ENCODE measurements at regions of chr17 and their contacts with region 1.

Region 1: DNA sequence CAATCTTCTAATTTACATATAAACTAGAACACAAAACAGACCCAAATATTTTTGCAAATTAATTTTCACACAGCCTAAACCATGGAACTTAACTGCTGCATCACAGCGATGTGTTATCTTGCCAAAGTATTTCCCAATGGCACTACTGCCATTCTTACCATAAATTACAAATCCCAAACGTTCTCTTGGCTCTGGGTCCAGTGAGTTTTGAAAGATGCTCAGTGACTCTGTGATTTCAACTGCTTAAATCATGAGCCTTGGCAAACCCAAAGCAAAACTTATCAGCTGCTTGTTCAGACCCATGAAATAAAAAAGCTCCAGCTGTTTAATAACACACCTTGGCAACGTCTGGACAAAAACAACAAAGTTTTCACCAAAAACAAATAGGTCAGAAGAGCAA is 223.0 kb downstream of the CA10 start:
- DNase-seq: no peak
- ATAC-seq: no peak
- H3K4me3 ChIP-seq: no peak overlapping the region
- H3K27ac ChIP-seq: no peak overlapping the region
- H3K4me1 ChIP-seq: no peaks in the 10 kb centered on the region
- H3K27me3 ChIP-seq: no peaks in the 10 kb centered on the region
- CTCF ChIP-seq: no peak

Region 2: GRCh38 chr17:51992864-51993416 is 57.5 kb after region 1 on chr17:
- intact Hi-C with region 1: loop called (anchors 5 kb)
- DNase-seq: no peak
- ATAC-seq: no peak
- H3K4me3 ChIP-seq: no peak overlapping the region
- H3K27ac ChIP-seq: no peak overlapping the region
- H3K4me1 ChIP-seq: no peaks in the 10 kb centered on the region
- H3K27me3 ChIP-seq: no peaks in the 10 kb centered on the region
- CTCF ChIP-seq: no peak

Measured in lower lobe of right lung (tissue), 2 donors.